ENCODE measurements at regions of chr2 and their contacts with region 1.

Region 1: GRCh38 chr2:64594226-64594989 is 59.3 kb downstream of the SERTAD2 start:
- DNase-seq: no peak
- H3K4me3 ChIP-seq: no peak overlapping the region
- H3K27ac ChIP-seq: peak overlapping the region in 1 of 2 donors; percentile 14
- H3K4me1 ChIP-seq: peaks cover 0 to 11% of the 10 kb centered on the region in 2 donors
- H3K27me3 ChIP-seq: no peaks in the 10 kb centered on the region
- CTCF ChIP-seq: no peak

Region 2: GRCh38 chr2:64562148-64562784 is 32.1 kb before region 1 on chr2:
- intact Hi-C with region 1: no loop called
- DNase-seq: no peak
- H3K4me3 ChIP-seq: no peak overlapping the region
- H3K27ac ChIP-seq: no peak overlapping the region
- H3K4me1 ChIP-seq: no peaks in the 10 kb centered on the region
- H3K27me3 ChIP-seq: no peaks in the 10 kb centered on the region
- CTCF ChIP-seq: peak; percentile 13 to 47 (median 34)

Region 3: GRCh38 chr2:64767670-64768468 is 173.5 kb after region 1 on chr2:
- intact Hi-C with region 1: loop called (anchors 5 kb)
- DNase-seq: peak; percentile 63 to 95
- H3K4me3 ChIP-seq: peak overlapping the region; percentile 72 to 79
- H3K27ac ChIP-seq: peak overlapping the region; percentile 97
- H3K4me1 ChIP-seq: peaks cover 0 to 2% of the 10 kb centered on the region in 2 donors
- H3K27me3 ChIP-seq: no peaks in the 10 kb centered on the region
- CTCF ChIP-seq: peak in 1 of 3 experiments; percentile 6